Prostate gland (tissue), 2 donors: ENCODE measurements at regions of chr14 and their contacts with region 1.

Region 1: GRCh38 chr14:34461334-34462131 is 507 bp downstream of the SPTSSA start:
- DNase-seq: peak; percentile 43
- H3K4me3 ChIP-seq: peak overlapping the region; percentile 70 to 71
- H3K27ac ChIP-seq: peak overlapping the region; percentile 84 to 90
- H3K4me1 ChIP-seq: peaks cover 7% of the 10 kb centered on the region
- H3K27me3 ChIP-seq: no peaks in the 10 kb centered on the region
- CTCF ChIP-seq: peak in 1 of 4 experiments; percentile 15
- POLR2A ChIP-seq: no peak

Region 2: DNA sequence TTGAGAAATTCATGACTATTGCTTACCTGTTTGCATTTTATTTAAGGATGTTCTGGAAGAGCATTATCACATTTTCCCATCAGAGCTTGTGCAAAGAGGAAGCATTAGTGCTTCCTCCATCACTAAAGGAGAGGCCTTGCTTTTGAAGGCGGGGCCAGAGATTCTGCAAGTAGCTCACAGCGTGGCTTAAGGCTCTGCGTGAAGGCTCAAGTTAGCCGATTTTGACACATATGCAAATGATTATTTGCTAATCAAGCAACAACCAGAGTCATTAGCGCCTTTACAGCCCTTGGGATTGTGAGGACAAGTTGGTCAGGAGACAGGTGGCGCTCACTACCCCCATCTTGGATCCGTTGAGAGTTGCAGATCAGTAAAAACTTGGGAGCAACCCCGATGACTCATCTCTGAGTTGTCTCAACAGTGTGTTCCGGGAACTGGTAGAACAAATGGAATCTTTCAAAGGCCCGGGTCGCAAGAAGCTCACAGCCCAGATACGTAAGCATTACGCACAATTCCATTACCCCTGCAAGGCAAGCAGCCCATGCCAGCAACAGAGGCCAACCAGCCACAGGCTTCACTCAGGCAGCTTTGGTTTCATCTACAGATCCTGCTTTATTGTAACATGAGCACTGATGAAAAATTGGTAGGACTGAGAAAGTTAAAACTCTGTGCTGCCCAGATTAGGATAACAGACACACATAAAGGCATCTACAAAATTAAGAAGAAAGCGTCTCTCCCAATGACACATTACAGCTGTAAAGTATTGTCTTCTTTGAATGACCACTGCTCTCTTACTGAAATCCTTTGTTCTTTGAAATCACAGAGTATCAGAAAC is 35.4 kb after region 1 on chr14:
- intact Hi-C with region 1: loop called (anchors 5 kb)
- DNase-seq: peak; percentile 73
- H3K4me3 ChIP-seq: no peak overlapping the region
- H3K27ac ChIP-seq: peak overlapping the region; percentile 60 to 70
- H3K4me1 ChIP-seq: no peaks in the 10 kb centered on the region
- H3K27me3 ChIP-seq: no peaks in the 10 kb centered on the region
- CTCF ChIP-seq: peak in 2 of 4 experiments; percentile 12 to 39
- POLR2A ChIP-seq: peak; percentile 29

Region 3: GRCh38 chr14:34507884-34508283 is 46.4 kb after region 1 on chr14:
- intact Hi-C with region 1: no loop called
- DNase-seq: no peak
- H3K4me3 ChIP-seq: no peak overlapping the region
- H3K27ac ChIP-seq: no peak overlapping the region
- H3K4me1 ChIP-seq: no peaks in the 10 kb centered on the region
- H3K27me3 ChIP-seq: no peaks in the 10 kb centered on the region
- CTCF ChIP-seq: no peak
- POLR2A ChIP-seq: no peak

Region 4: GRCh38 chr14:34539407-34540180 is 78.1 kb after region 1 on chr14 and contains the start of gene EAPP:
- intact Hi-C with region 1: loop called (anchors 5 kb)
- DNase-seq: peak; percentile 99
- H3K4me3 ChIP-seq: peak within 1 kb of the TSS; percentile 89 to 97
- H3K27ac ChIP-seq: peak within 1 kb of the TSS; percentile 96 to 97
- H3K4me1 ChIP-seq: no peaks in the 10 kb centered on the region
- H3K27me3 ChIP-seq: no peaks in the 10 kb centered on the region
- CTCF ChIP-seq: peak in 2 of 4 experiments; percentile 29 to 41
- POLR2A ChIP-seq: peak; percentile 97
- total RNA-seq, gene EAPP: 41.6 to 52.6 TPM

Region 5: GRCh38 chr14:35046048-35046741 is 584.7 kb after region 1 on chr14 and contains the start of gene FAM177A1:
- intact Hi-C with region 1: loop called (anchors 5 kb)
- DNase-seq: peak; percentile 99
- H3K4me3 ChIP-seq: peak within 1 kb of the TSS; percentile 74 to 92
- H3K27ac ChIP-seq: peak within 1 kb of the TSS; percentile 98 to 100
- H3K4me1 ChIP-seq: no peaks in the 10 kb centered on the region
- H3K27me3 ChIP-seq: no peaks in the 10 kb centered on the region
- CTCF ChIP-seq: peak in 2 of 4 experiments; percentile 24 to 53
- POLR2A ChIP-seq: peak; percentile 96
- total RNA-seq, gene FAM177A1: 58.1 to 89.8 TPM